Gastrocnemius medialis (tissue), 4 donors: ENCODE measurements at regions of chr5 and their contacts with region 1.

Region 1: GRCh38 chr5:14879937-14880589 is 8.5 kb upstream of the ANKH start:
- DNase-seq: no peak
- ATAC-seq: no peak
- H3K4me3 ChIP-seq: no peak overlapping the region
- H3K27ac ChIP-seq: no peak overlapping the region
- H3K4me1 ChIP-seq: peaks cover 8 to 17% of the 10 kb centered on the region in 2 donors
- H3K27me3 ChIP-seq: no peaks in the 10 kb centered on the region
- CTCF ChIP-seq: no peak
- POLR2A ChIP-seq: no peak

Region 2: DNA sequence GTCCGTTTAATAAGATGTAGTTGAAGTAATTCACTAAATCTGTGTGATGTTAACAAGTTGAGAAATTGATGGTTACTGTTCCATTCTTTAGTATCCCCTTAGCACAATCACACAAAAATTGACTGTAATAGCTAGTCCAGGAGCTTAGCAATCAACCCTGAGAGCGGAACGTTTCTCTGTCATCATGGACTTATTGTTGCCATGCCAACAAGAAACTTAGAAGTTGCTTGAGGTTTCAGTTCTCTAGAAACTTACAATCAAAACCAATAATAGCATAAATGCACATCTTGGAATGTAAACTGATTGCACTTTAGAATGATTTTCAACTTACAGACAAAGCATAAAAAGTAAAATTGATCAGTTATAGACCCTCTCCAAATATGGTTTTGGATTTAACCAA is 116.9 kb after region 1 on chr5:
- in situ Hi-C with region 1: loop called in 3 of 4 experiments (anchors 10 kb)
- intact Hi-C with region 1: no loop called
- DNase-seq: no peak
- ATAC-seq: no peak
- H3K4me3 ChIP-seq: no peak overlapping the region
- H3K27ac ChIP-seq: no peak overlapping the region
- H3K4me1 ChIP-seq: no peaks in the 10 kb centered on the region
- H3K27me3 ChIP-seq: no peaks in the 10 kb centered on the region
- CTCF ChIP-seq: no peak
- POLR2A ChIP-seq: no peak